Activated CD4-positive, alpha-beta T cell treated with anti-CD3 and anti-CD28 coated beads, Interleukin-2, amount 10 ng/mL, durations not matched to agents 24 days and 14 days (primary cell): ENCODE measurements at regions of chr17 and their contacts with region 1.

Region 1: DNA sequence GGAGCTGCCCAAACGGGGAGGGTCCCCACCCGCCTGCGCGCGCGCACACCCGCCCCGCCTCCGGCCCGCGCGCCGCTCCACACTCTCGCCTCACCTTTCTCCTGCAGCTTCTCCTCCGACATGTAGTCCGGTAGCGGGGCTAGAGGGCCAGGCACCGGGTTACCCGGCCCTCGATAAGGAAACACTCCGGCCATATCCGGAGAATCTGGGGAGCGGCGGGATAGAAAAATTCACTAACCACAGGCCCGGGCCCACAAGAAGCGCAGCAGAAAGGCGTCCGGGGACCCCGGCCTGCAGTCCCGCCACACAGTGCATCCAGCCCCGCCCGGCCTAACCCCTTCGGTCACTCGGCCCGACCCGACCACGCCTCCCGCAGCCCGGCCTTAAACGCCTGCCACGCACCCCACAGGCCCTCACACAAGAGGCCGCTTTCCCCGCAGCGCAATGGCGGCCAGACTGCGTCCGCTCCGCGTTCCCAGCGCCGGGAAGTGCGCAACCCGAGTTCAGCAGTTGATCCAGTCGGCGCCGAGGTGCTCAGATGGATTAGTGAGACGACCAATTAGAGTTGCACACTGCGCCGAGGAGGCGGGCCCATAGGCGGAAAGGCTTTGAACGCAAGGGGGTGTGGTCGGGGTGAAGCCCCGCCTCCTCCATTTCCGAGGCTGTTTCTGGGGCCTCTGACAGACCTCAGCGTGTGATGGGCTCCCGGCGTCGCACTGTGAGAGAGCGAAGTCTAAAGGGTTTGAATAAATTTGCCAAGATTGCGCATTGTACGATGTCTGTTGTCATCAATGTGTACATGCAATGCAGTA is at the start of gene PRPF8:
- DNase-seq: peak; percentile 100
- H3K4me3 Mint-ChIP-seq: peak within 1 kb of the TSS; percentile 98
- H3K27ac Mint-ChIP-seq: peak within 1 kb of the TSS; percentile 97
- H3K4me1 Mint-ChIP-seq: peaks cover 30% of the 10 kb centered on the region
- H3K27me3 Mint-ChIP-seq: no peaks in the 10 kb centered on the region
- total RNA-seq, gene PRPF8: 432 and 442 TPM in 2 replicates

Region 2: GRCh38 chr17:1648963-1649843 is 35.4 kb before region 1 on chr17:
- intact Hi-C with region 1: loop called (anchors 2 kb)
- DNase-seq: peak; percentile 98
- H3K4me3 Mint-ChIP-seq: peak overlapping the region; percentile 77
- H3K27ac Mint-ChIP-seq: peak overlapping the region; percentile 66
- H3K4me1 Mint-ChIP-seq: peaks cover 31% of the 10 kb centered on the region
- H3K27me3 Mint-ChIP-seq: no peaks in the 10 kb centered on the region

Region 3: GRCh38 chr17:1703063-1703462 is 18.5 kb after region 1 on chr17:
- intact Hi-C with region 1: no loop called
- DNase-seq: no peak
- H3K4me3 Mint-ChIP-seq: no peak overlapping the region
- H3K27ac Mint-ChIP-seq: no peak overlapping the region
- H3K4me1 Mint-ChIP-seq: peaks cover 3% of the 10 kb centered on the region
- H3K27me3 Mint-ChIP-seq: peaks cover 25% of the 10 kb centered on the region